IMR-90 (cell line): ENCODE measurements at regions of chr9 and their contacts with region 1.

Region 1: DNA sequence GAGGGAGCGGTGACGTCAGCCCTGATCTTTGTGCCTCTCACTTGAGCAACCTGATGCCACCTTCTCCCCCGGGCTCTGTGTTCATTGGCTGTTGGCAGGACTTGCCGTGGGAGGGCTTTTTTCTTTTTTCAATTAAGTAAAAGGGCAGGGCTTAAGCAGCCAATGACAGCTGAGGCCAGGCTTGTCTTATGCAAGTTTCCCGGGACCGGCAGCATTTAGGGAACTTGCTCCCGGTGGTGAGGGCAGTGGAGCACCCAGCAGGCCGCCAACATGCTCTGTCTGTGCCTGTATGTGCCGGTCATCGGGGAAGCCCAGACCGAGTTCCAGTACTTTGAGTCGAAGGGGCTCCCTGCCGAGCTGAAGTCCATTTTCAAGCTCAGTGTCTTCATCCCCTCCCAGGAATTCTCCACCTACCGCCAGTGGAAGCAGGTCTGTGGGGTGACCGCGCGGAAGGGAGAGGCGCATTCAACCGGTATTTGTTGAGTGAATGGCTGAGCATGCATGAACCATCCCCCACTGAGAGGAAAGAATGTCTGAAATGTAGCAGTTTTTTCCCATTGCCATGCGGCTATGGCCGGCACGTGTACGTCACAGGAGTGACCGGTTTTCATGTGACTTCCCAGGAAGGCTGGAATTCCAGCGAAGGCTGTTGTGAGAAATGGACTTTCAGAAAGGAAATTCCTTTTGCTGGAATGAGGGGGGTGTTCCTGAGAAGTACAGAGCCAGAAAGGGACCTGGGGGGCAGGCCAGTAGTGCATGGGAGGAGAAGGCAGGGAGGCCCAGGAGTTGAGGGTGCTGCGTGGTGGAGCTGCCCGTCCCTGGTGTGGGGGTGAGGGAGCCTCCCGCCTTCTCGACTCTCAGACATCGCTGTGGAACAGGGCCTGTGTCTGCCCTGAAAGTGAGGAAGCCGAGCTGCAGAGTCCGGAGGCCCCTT is 29.0 kb downstream of the PTGES2 start:
- DNase-seq: peak; percentile 98
- ATAC-seq: peak; percentile 75
- H3K4me3 ChIP-seq: peak overlapping the region; percentile 47
- H3K27ac ChIP-seq: peak overlapping the region; percentile 86
- H3K4me1 ChIP-seq: peaks cover 32% of the 10 kb centered on the region
- H3K27me3 ChIP-seq: no peaks in the 10 kb centered on the region
- CTCF ChIP-seq: no peak
- POLR2A ChIP-seq: peak; percentile 99
- RAD21 ChIP-seq: 0 out of 2 replicates have a peak, but pooled peaks have one; percentile 1

Region 2: DNA sequence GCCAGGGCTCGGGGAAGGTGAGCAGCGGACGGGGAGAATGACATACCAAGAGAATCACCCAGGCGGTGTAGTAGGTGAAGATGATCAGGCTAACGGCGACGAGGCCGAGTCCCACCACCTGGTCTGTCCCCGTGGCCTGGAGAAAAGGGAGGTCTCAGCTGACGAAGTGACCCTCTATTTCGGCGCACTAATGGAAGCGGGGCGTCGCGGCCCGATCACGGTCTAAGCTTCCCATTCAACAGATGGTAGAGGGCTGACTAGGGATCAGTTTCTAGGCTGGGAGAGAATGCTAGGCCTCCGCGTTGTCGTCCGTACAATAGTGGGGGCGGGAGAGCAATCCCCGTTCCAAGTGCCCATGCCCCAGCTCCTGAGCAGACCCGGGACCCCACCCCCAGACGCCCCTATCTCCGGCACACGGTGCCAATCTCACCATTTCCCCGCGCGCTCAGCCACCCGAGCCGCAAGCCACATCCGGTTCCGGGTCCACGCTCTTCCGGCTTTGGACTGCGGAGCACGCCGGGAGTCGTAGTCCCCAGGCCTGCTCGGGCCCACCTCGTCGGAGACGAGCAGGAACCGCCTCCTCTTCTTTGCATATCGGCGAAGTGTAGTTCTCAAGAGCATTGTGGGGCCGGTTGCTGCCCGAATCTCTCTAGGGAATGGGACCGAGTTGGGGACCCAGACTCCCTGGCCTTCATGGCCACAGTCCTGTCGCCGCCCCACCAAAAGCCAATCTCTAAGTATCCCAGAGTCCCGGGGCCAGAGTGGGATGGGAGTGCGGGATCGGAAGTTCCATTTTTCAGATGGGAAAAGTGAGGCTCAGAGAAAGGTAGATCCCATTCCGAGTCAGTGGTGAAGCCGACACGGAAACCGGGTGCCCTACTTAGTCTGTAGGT is 160.9 kb before region 1 on chr9 and contains the start of gene DPM2:
- CTCF ChIA-PET with region 1: interaction called, 4 read pairs
- POLR2A ChIA-PET with region 1: no interaction called
- dilution Hi-C with region 1: no loop called
- in situ Hi-C with region 1: loop called (anchors 5 kb)
- intact Hi-C with region 1: loop called (anchors 5 kb)
- DNase-seq: peak; percentile 81
- ATAC-seq: peak; percentile 92
- H3K4me3 ChIP-seq: peak within 1 kb of the TSS; percentile 71
- H3K27ac ChIP-seq: peak within 1 kb of the TSS; percentile 68
- H3K4me1 ChIP-seq: peaks cover 18% of the 10 kb centered on the region
- H3K27me3 ChIP-seq: no peaks in the 10 kb centered on the region
- CTCF ChIP-seq: no peak
- POLR2A ChIP-seq: peak; percentile 68; the same call in 1 of the 2 replicates
- RAD21 ChIP-seq: no peak
- total RNA-seq, gene DPM2: 10.8 TPM in 2 replicates

Region 3: GRCh38 chr9:128621730-128622455 is 523.3 kb after region 1 on chr9:
- CTCF ChIA-PET with region 1: no interaction called
- POLR2A ChIA-PET with region 1: no interaction called
- dilution Hi-C with region 1: no loop called
- in situ Hi-C with region 1: no loop called
- intact Hi-C with region 1: no loop called
- DNase-seq: no peak
- ATAC-seq: no peak
- H3K4me3 ChIP-seq: no peak overlapping the region
- H3K27ac ChIP-seq: no peak overlapping the region
- H3K4me1 ChIP-seq: no peaks in the 10 kb centered on the region
- H3K27me3 ChIP-seq: no peaks in the 10 kb centered on the region
- CTCF ChIP-seq: no peak
- POLR2A ChIP-seq: no peak
- RAD21 ChIP-seq: no peak